ENCODE measurements at regions of chr6 and their contacts with region 1.

Region 1: GRCh38 chr6:43769526-43770416 is at the start of gene VEGFA:
- DNase-seq: peak; percentile 83
- H3K4me3 Mint-ChIP-seq: peak within 1 kb of the TSS; percentile 97
- H3K27ac Mint-ChIP-seq: peak within 1 kb of the TSS; percentile 95
- H3K4me1 Mint-ChIP-seq: peaks cover 29% of the 10 kb centered on the region
- H3K27me3 Mint-ChIP-seq: peaks cover 5% of the 10 kb centered on the region
- total RNA-seq, gene VEGFA: 42.3 and 43.2 TPM in 2 replicates

Region 2: DNA sequence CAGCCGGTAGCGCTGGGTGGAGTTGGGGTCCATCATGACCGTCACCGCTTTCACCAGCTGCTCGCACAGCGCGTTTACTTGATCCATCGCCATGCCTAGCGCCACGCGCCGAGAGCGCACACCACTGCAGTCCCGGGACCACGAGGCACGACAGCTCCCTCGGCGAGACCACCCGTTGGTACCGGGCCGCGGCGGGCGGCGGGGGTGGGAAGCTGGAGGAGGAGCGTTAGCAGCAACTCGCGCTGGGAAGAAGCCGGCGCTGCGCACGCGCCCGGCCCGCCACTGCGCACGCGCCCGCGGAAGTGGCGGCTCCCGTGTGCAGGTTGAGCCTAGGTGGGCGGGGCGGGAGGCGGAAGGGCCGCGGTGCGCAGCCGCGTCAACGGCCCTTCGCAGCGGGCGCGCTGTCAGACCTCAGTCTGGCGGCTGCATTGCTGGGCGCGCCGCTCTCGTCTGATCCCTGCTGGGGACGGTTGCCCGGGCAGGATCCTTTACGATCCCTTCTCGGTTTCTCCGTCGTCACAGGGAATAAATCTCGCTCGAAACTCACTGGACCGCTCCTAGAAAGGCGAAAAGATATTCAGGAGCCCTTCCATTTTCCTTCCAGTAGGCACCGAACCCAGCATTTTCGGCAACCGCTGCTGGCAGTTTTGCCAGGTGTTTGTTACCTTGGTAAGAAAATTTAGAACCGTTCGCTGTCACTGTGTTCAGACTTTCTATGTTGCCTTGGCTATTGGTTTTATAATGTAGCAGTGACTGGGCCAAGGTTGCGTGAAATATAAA is 193.8 kb before region 1 on chr6 and contains the starts of genes POLH and XPO5:
- intact Hi-C with region 1: loop called (anchors 2 kb)
- DNase-seq: peak; percentile 90
- H3K4me3 Mint-ChIP-seq: peak within 1 kb of the TSS; percentile 91
- H3K27ac Mint-ChIP-seq: peak within 1 kb of the TSS; percentile 86
- H3K4me1 Mint-ChIP-seq: peaks cover 43% of the 10 kb centered on the region
- H3K27me3 Mint-ChIP-seq: no peaks in the 10 kb centered on the region
- total RNA-seq, gene POLH: 35.7 and 39.1 TPM in 2 replicates
- total RNA-seq, gene XPO5: 135 and 149 TPM in 2 replicates

Region 3: GRCh38 chr6:43687437-43688347 is 82.1 kb before region 1 on chr6 and contains the start of gene MRPS18A:
- intact Hi-C with region 1: loop called (anchors 1 kb)
- DNase-seq: peak; percentile 81
- H3K4me3 Mint-ChIP-seq: peak within 1 kb of the TSS; percentile 92
- H3K27ac Mint-ChIP-seq: peak within 1 kb of the TSS; percentile 85
- H3K4me1 Mint-ChIP-seq: peaks cover 46% of the 10 kb centered on the region
- H3K27me3 Mint-ChIP-seq: no peaks in the 10 kb centered on the region
- total RNA-seq, gene MRPS18A: 55.0 and 55.9 TPM in 2 replicates

Region 4: GRCh38 chr6:43838276-43839036 is 68.7 kb after region 1 on chr6:
- intact Hi-C with region 1: loop called (anchors 1 kb)
- DNase-seq: no peak
- H3K4me3 Mint-ChIP-seq: no peak overlapping the region
- H3K27ac Mint-ChIP-seq: no peak overlapping the region
- H3K4me1 Mint-ChIP-seq: no peaks in the 10 kb centered on the region
- H3K27me3 Mint-ChIP-seq: peaks cover 3% of the 10 kb centered on the region

Region 5: DNA sequence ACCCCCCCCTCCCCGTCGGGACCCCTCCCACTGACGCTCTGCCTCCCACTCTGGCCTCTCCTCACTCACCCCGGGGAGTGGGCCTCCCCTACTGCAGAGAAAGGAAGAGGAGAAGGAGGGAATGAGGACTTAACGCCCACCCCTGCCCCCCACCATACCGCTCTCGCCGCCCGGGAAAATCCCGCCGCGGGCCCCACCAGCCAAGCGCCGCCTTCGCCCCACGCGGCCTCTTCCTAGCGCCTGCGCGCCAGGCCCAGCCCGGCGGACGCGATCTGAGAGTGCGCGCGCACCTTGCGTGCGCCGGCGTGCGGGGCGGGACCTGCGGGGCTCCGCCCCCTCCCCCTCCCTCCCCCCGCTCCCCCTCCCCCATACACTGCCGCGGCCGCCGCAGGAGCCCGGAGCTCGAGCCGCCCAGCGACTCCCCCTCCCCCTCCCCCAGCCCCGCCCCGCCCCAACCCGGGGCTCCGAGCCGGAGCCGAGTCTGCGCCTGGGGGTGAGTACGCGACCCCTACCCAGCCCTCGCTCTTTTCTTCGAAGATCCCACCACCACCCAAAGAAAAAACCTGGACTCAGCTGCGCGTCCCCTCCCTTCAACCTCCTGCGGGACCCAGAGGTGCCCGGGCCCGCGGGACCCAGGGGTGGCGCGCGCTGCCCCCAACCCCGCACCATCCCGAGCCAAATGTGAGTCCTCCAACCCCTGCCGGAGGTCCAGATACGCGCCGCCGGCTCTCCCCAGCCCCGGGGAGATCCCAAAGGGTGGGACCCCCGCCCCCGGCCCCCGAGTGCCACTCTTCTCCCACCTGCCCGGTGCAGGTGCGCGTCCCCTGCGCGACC is 357.6 kb after region 1 on chr6 and contains the starts of genes MRPL14 and TMEM63B:
- intact Hi-C with region 1: loop called (anchors 1 kb)
- DNase-seq: peak; percentile 89
- H3K4me3 Mint-ChIP-seq: peak within 1 kb of the TSS; percentile 90
- H3K27ac Mint-ChIP-seq: peak within 1 kb of the TSS; percentile 94
- H3K4me1 Mint-ChIP-seq: peaks cover 50% of the 10 kb centered on the region
- H3K27me3 Mint-ChIP-seq: no peaks in the 10 kb centered on the region
- total RNA-seq, gene MRPL14: 62.6 and 68.6 TPM in 2 replicates
- total RNA-seq, gene TMEM63B: 17.0 and 20.7 TPM in 2 replicates

Region 6: GRCh38 chr6:44246663-44247337 is 477.0 kb after region 1 on chr6 and contains the start of gene HSP90AB1:
- intact Hi-C with region 1: loop called (anchors 5 kb)
- DNase-seq: peak; percentile 96
- H3K4me3 Mint-ChIP-seq: peak within 1 kb of the TSS; percentile 96
- H3K27ac Mint-ChIP-seq: peak within 1 kb of the TSS; percentile 98
- H3K4me1 Mint-ChIP-seq: peaks cover 45% of the 10 kb centered on the region
- H3K27me3 Mint-ChIP-seq: peaks cover 5% of the 10 kb centered on the region
- total RNA-seq, gene HSP90AB1: 2,065 and 2,095 TPM in 2 replicates